Ovary (tissue), 10 donors: ENCODE measurements at regions of chr17 and their contacts with region 1.

Region 1: GRCh38 chr17:7931709-7932482 is at the starts of genes CNTROB and TRAPPC1:
- DNase-seq: peak; percentile 99 to 100 (median 100)
- H3K4me3 ChIP-seq: peak within 1 kb of the TSS; percentile 84
- H3K27ac ChIP-seq: peak within 1 kb of the TSS; percentile 32 to 36
- H3K4me1 ChIP-seq: peaks cover 4% of the 10 kb centered on the region
- H3K27me3 ChIP-seq: no peaks in the 10 kb centered on the region
- CTCF ChIP-seq: peak in 1 of 3 donors; percentile 10
- EP300 ChIP-seq: peak; percentile 36
- POLR2A ChIP-seq: peak; percentile 85
- total RNA-seq, gene CNTROB: 15.0 to 27.3 (median 25.9) TPM
- total RNA-seq, gene TRAPPC1: 27.5 to 94.3 (median 74.0) TPM

Region 2: DNA sequence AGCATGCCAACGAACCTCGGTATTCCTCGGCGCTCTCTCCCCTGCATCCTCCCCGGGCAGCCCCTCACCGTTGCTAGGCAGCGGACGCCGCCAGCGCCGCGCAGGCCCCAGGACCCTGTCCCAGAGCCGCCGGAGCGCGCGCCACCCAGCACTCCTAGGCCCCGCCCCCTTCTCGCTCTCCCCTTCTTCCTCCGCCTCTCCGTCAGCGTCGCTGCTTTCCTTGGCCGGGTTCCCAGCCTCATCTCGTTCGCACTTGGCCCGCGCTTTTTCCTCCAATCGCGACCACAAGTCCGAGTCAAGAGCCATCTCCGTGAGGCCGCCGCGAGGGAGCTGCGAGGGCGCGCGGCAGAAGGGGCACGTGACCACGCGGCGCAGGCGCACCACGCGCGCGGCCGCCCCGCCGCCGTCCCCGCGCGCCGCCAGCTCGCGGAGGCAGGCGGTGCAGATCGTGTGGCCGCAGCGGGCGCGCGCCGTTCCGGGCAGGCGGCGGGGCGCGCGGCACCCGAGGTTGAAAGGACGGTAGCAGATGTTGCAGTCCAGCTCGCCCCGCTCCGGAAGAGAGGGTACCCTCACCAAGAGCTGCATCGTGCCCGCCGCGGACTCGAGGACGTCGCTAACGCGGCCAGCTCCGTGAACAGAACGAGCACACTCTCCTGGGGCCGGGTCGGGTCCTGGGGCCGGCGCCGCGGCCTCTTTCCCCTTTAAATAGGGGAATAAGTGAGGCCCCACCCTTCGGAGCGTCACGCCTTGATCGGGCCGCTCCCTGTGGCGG is 16.1 kb before region 1 on chr17 and contains the start of gene RNF227:
- intact Hi-C with region 1: loop called in 1 of 4 experiments (anchors 2 kb)
- DNase-seq: peak; percentile 94 to 97 (median 96)
- H3K4me3 ChIP-seq: peak within 1 kb of the TSS; percentile 56
- H3K27ac ChIP-seq: peak within 1 kb of the TSS; percentile 97 to 98
- H3K4me1 ChIP-seq: peaks cover 4% of the 10 kb centered on the region
- H3K27me3 ChIP-seq: no peaks in the 10 kb centered on the region
- CTCF ChIP-seq: peak in 2 of 3 donors; percentile 6 to 19
- EP300 ChIP-seq: no peak
- POLR2A ChIP-seq: peak; percentile 58
- total RNA-seq, gene RNF227: 2.7 to 16.5 (median 5.2) TPM

Region 3: DNA sequence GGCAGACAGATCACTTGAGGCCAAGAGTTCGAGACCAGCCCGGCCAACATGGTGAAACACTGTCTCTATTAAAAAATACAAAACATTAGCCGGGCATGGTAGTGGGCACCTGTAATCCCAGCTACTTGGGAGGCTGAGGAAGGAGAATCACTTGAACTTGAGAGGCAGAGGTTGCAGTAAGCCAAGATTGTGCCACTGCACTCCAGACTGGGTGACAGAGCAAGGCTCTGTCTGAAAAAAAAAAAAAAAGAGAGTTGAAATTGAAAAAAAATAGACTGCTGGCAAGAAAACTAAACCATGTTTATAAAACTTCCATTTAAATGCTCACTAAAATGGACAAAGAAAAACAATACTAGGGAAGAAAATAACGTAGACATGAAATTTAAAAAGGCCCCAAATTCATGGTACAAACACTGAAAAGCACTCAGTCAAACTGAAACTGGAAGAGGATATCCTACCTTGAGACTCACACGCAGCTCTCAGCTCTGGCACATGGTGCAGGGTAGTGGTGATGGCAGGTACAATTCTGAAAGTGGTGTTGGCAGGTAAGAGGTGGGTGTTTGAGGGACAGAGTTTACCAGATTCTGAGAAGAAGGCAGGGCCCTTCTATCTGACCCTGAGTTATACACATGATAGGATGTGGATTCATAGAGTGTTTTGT is 19.4 kb after region 1 on chr17:
- intact Hi-C with region 1: no loop called
- DNase-seq: no peak
- H3K4me3 ChIP-seq: no peak overlapping the region
- H3K27ac ChIP-seq: no peak overlapping the region
- H3K4me1 ChIP-seq: no peaks in the 10 kb centered on the region
- H3K27me3 ChIP-seq: no peaks in the 10 kb centered on the region
- CTCF ChIP-seq: no peak
- EP300 ChIP-seq: no peak
- POLR2A ChIP-seq: no peak

Region 4: DNA sequence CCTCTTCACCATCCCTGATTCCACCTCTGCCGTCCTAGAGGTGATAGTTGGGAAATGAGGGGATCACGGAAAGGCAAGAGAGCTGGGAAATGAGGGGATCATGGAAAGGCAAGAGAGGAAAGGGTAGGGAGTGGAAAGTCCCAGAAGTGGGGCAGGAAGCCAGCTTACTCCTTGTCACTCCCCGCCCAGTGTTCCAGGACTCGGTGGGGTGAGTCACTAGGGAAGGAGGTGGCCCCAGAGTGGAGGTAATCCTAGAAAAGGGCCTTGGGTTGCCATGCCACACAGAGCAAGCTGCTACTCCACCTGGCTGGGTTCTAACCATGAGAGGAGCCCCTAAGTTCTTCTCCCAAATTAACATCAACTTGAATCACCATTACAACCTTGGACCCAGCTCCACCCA is 171.7 kb after region 1 on chr17:
- intact Hi-C with region 1: no loop called
- DNase-seq: no peak
- H3K4me3 ChIP-seq: no peak overlapping the region
- H3K27ac ChIP-seq: no peak overlapping the region
- H3K4me1 ChIP-seq: no peaks in the 10 kb centered on the region
- H3K27me3 ChIP-seq: no peaks in the 10 kb centered on the region
- CTCF ChIP-seq: no peak
- EP300 ChIP-seq: no peak
- POLR2A ChIP-seq: no peak

Region 5: DNA sequence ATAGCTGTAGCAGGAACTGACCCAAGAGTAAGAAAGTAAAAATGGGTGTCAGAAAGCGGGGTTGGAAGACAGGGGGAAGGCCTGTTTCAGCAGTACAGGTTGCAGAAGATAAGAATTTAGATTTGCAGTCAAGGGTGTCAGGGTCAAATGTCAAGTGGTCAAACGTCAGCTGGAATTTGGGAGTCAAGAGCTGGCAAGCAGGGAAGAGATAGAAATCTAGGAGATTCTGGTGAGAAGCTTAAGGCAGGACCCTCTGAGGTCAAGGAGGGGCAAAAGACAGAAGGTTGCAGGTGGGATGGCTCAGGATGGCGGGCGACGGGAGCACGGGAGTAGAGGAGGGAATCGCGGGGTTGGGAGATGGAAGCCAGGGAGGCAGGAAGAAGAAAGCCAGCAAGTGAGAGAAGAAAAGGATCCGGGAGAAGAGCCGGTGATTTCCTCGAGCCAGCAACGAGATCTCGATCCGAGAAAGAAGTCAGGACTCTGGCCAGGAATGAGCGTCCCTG is 363.0 kb after region 1 on chr17:
- intact Hi-C with region 1: loop called in 1 of 4 experiments (anchors 5 kb)
- DNase-seq: no peak
- H3K4me3 ChIP-seq: peak overlapping the region; percentile 74
- H3K27ac ChIP-seq: peak overlapping the region in 1 of 2 donors; percentile 43
- H3K4me1 ChIP-seq: no peaks in the 10 kb centered on the region
- H3K27me3 ChIP-seq: no peaks in the 10 kb centered on the region
- CTCF ChIP-seq: no peak
- EP300 ChIP-seq: no peak
- POLR2A ChIP-seq: no peak